WTC11 (cell line): ENCODE measurements at regions of chr15 and their contacts with region 1.

Region 1: GRCh38 chr15:44261007-44261706 is 27.4 kb upstream of the GOLM2 start:
- DNase-seq: peak; percentile 64
- ATAC-seq: peak; percentile 98
- H3K4me3 Mint-ChIP-seq: no peak overlapping the region
- H3K27ac Mint-ChIP-seq: no peak overlapping the region
- H3K4me1 Mint-ChIP-seq: peaks cover 8% of the 10 kb centered on the region
- H3K27me3 Mint-ChIP-seq: peaks cover 3% of the 10 kb centered on the region; the same call in 1 of the 2 replicates
- CTCF ChIP-seq: no peak

Region 2: GRCh38 chr15:44081026-44082013 is 179.8 kb before region 1 on chr15:
- CTCF ChIA-PET with region 1: no interaction called
- POLR2A ChIA-PET with region 1: interaction called, 10 read pairs
- DNase-seq: no peak
- ATAC-seq: no peak
- H3K4me3 Mint-ChIP-seq: no peak overlapping the region
- H3K27ac Mint-ChIP-seq: no peak overlapping the region; the same call in 1 of the 2 replicates
- H3K4me1 Mint-ChIP-seq: no peaks in the 10 kb centered on the region
- H3K27me3 Mint-ChIP-seq: no peaks in the 10 kb centered on the region
- CTCF ChIP-seq: no peak